Kidney (tissue), 22 donors: ENCODE measurements at regions of chr11 and their contacts with region 1.

Region 1: GRCh38 chr11:126716456-126717083 is 284.0 kb downstream of the KIRREL3 start:
- DNase-seq: peak in 4 of 5 donors; percentile 65 to 80 (median 68)
- H3K4me3 ChIP-seq: no peak overlapping the region
- H3K27ac ChIP-seq: no peak overlapping the region
- H3K4me1 ChIP-seq: no peaks in the 10 kb centered on the region
- H3K27me3 ChIP-seq: no peaks in the 10 kb centered on the region
- CTCF ChIP-seq: peak; percentile 60

Region 2: GRCh38 chr11:126989942-126990715 is 273.6 kb after region 1 on chr11:
- intact Hi-C with region 1: loop called (anchors 10 kb)
- DNase-seq: peak; percentile 85 to 91 (median 88)
- H3K4me3 ChIP-seq: no peak overlapping the region
- H3K27ac ChIP-seq: no peak overlapping the region
- H3K4me1 ChIP-seq: no peaks in the 10 kb centered on the region
- H3K27me3 ChIP-seq: no peaks in the 10 kb centered on the region
- CTCF ChIP-seq: peak; percentile 94